Testis (tissue), 5 donors: ENCODE measurements at regions of chr18 and their contacts with region 1.

Region 1: DNA sequence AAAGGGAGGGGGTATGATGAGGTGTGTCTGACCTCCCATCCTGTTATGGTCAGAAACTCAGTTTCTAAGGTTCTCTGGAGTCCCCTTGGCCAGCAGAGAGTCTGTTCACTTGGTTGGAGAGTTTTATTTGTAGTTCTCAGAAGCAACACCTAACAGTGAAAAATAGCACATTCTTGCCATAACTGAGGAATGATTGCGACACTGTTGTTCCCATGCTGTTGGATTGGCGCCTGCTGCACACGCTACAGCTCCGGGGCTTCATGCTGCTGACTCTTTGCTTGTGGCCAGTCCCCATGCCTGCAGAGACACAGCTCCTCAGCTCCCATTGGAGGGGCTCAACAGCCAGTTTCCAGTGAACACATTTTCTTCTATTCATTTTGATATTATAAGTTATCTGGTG is 42.1 kb downstream of the TPGS2 start:
- DNase-seq: peak; percentile 18
- H3K4me3 ChIP-seq: no peak overlapping the region
- H3K27ac ChIP-seq: no peak overlapping the region
- H3K4me1 ChIP-seq: no peaks in the 10 kb centered on the region
- H3K27me3 ChIP-seq: no peaks in the 10 kb centered on the region
- CTCF ChIP-seq: no peak
- POLR2A ChIP-seq: no peak

Region 2: DNA sequence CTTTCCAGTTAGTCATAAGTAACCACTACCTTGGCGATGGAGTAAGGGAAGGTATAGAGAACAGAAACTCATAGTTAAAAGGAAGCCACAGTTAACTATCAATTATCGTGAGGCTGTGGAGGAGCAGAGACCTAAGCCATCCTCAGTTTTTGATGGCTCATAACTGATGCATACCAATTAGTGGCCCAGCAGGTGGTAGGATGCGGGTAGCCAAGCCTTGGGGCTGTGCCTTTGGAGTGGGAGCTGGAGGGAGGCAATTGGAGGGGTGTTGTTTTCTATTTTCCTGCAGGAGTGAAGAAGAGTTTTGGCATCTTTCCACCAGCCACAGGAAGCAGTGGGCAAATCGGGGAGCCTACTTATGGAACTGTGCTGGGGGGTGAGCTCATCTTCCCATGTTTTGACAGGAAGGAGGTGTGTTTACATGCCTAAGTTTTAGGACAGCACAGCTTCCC is 152.7 kb before region 1 on chr18:
- intact Hi-C with region 1: no loop called
- DNase-seq: no peak
- H3K4me3 ChIP-seq: no peak overlapping the region
- H3K27ac ChIP-seq: no peak overlapping the region
- H3K4me1 ChIP-seq: no peaks in the 10 kb centered on the region
- H3K27me3 ChIP-seq: no peaks in the 10 kb centered on the region
- CTCF ChIP-seq: no peak
- POLR2A ChIP-seq: no peak

Region 3: DNA sequence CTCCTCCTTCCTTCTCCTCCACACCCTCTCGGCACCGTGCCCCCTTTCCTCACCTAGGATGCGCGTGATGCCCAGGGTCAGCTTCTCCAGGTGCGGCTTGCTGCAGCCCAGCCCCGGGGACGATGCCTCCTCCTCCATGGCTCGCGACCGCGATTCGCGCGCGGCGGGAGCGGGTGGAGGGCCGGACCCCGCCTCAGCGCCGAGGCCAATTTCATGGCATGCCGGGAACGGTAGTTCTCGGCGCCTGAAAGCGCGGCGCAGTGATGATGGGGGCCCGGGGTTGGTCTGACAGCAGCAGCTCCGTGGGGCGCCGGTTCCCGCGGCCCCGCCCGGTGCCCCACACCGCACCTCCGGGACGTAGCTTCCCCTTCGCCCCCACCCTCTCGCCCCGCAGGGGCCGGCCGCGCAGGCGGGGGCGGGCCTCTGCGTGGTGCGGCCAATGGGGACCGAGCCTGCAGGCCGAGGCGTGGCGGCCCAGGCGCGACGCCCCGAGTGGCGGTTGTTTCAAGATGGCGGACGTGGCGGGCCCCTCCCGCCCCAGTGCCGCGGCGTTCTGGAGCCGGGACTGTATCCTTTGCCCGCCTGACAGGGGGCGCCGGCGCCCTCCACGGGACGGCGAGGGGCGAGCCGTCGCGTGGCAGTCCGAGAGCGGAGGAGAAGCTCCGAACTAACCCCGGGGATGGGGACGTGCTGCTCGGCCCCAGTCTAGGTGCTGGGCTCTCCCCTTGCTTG is 42.1 kb after region 1 on chr18 and contains the starts of genes KIAA1328 and TPGS2:
- intact Hi-C with region 1: loop called (anchors 2 kb)
- DNase-seq: peak; percentile 89
- H3K4me3 ChIP-seq: peak within 1 kb of the TSS; percentile 86 to 96
- H3K27ac ChIP-seq: peak within 1 kb of the TSS; percentile 86 to 89
- H3K4me1 ChIP-seq: no peaks in the 10 kb centered on the region
- H3K27me3 ChIP-seq: no peaks in the 10 kb centered on the region
- CTCF ChIP-seq: peak in 2 of 3 experiments; percentile 8 to 31
- POLR2A ChIP-seq: no peak
- total RNA-seq, gene KIAA1328: 35.0 to 48.7 TPM
- total RNA-seq, gene TPGS2: 338 to 628 TPM

Region 4: GRCh38 chr18:36934884-36935283 is 148.2 kb after region 1 on chr18:
- intact Hi-C with region 1: no loop called
- DNase-seq: no peak
- H3K4me3 ChIP-seq: no peak overlapping the region
- H3K27ac ChIP-seq: no peak overlapping the region
- H3K4me1 ChIP-seq: no peaks in the 10 kb centered on the region
- H3K27me3 ChIP-seq: no peaks in the 10 kb centered on the region
- CTCF ChIP-seq: no peak
- POLR2A ChIP-seq: no peak